Aorta (tissue), 5 donors: ENCODE measurements at regions of chr4 and their contacts with region 1.

Region 1: GRCh38 chr4:25552580-25553271 is 102.9 kb upstream of the SLC34A2 start:
- DNase-seq: peak in 1 of 2 donors; percentile 48
- ATAC-seq: peak; percentile 52
- H3K4me3 ChIP-seq: peak overlapping the region; percentile 29 to 32
- H3K27ac ChIP-seq: no peak overlapping the region
- H3K4me1 ChIP-seq: peaks cover 0 to 4% of the 10 kb centered on the region in 2 donors
- H3K27me3 ChIP-seq: no peaks in the 10 kb centered on the region

Region 2: DNA sequence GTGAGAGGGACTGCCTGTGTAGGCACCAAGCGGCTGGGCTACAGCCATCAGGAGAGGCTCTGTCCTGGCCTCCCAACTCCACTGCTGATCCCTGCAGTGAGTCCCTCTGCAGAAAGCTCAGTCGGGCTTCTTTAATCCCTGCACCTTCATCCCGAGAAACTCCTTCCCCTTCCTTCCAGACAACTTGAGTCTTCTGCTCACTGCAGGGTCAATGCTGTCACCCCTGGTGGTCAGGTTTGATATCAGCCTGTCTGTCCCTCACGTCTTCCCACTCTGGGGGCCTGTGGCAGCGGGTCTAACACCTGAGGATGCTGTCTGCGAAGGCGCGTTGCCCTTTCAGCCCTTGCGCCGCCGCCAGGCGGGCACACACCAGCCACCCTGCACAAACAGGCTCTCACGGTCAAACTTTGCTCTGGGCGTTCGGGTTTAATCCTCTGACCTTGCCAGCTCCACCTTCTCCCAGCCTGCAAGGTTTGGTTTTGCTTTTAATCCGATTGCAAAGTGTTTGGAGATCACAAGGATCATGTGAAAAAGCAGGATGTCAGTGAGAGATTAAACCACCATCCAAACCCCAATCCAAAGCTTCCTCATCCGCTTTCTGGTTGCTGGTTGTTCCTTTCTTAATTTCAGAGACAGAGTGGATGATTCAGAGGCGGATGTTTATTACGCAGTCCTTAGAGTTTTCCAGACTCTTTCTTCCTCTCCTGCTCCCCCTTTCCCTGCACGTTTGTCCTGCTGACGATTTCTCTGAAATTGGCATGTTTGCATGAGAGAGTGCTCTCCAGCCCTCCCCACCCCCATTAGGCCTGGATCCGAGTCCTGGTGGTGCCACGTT is 28.1 kb after region 1 on chr4:
- intact Hi-C with region 1: loop called in 1 of 2 experiments (anchors 2 kb)
- DNase-seq: no peak
- ATAC-seq: no peak
- H3K4me3 ChIP-seq: no peak overlapping the region
- H3K27ac ChIP-seq: no peak overlapping the region
- H3K4me1 ChIP-seq: no peaks in the 10 kb centered on the region
- H3K27me3 ChIP-seq: no peaks in the 10 kb centered on the region